Naive thymus-derived CD4-positive, alpha-beta T cell (primary cell): ENCODE measurements at regions of chr16 and their contacts with region 1.

Region 1: DNA sequence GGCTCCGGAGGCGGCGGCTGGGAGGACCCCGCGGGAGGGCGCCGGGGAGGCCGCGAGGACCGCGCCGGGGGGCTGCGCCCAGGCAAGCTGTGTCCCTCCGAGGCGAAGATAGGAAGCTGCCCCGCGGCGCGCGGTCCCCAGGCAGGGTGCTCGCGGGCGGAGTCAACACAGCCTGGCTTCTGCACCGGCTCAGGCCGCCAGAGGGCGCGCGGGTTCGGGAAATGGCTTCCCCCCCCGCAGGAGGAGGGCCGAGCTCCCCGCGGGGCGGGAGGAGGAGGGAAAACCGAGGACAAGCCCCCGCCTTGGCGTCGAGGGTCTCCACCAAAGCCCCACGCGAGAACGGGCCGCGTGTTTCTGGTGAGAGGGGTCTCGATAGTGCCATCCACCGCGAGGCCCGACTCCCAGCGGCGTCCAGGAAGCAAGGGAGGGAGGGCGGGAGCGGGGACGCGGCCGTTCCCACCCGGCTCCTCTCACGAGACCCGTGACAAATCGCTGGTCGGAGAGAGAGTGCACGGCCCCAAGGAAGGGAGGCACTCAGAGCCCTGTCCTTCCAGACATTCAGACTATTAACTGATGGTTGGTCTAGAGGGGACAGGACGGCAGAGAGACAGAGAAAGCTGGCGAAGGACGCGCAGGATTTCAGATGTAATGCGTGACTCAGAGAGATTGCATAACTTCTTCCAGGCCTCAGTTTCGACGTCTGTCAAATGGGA is 64.4 kb upstream of the DNAJA2 start:
- DNase-seq: peak; percentile 69 to 95 (median 83)
- ATAC-seq: peak; percentile 99
- H3K4me3 ChIP-seq: peak overlapping the region; percentile 62
- H3K4me3 Mint-ChIP-seq: peak overlapping the region; percentile 25 to 85 (median 74)
- H3K27ac ChIP-seq: peak overlapping the region; percentile 27
- H3K27ac Mint-ChIP-seq: peak overlapping the region in 1 of 9 donors; percentile 38
- H3K4me1 ChIP-seq: no peaks in the 10 kb centered on the region
- H3K4me1 Mint-ChIP-seq: peaks cover 0 to 8% (median 4%) of the 10 kb centered on the region in 7 donors
- H3K27me3 ChIP-seq: no peaks in the 10 kb centered on the region
- H3K27me3 Mint-ChIP-seq: peaks cover 0 to 13% (median 0%) of the 10 kb centered on the region in 5 donors

Region 2: DNA sequence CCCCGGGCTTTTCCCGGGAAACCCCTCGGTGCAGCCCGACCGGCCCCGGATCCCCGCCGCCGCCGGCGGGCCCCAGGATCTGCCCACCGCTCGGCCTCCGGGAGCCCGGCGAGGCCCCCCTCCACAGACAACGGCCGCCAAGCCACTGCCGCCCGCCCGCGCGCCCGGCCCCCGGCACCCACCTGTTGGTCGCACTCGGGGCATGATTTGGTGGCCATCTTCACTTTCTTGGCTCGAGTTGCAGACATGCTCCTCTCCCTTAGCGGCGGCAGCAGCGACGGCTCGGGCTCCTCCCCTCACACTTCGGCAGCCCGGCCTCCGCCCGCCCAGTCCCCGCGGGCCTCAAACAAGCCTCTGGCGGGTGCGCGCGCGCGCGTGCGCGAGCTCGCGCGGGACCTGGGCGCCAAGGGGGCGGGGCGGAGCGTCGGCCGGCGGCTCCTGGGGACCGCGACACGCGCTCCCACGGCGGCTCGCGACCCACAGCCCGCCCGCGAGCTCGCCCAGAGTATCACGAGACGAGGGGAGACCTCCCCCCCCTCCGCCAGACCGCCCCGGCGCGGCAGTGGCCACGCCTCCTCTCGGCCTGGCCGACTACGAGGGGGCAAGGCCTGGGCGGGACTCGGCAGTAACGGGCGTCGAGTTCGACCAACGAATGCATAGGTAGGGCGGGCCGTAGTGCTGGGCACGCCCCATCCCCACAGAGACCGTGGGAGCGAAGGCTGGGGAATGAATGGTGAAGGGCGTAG is 206.8 kb before region 1 on chr16 and contains the start of gene C16orf87:
- CTCF ChIA-PET with region 1: no interaction called
- POLR2A ChIA-PET with region 1: no interaction called
- intact Hi-C with region 1: loop called in 1 of 2 experiments (anchors 1 kb)
- DNase-seq: peak; percentile 88 to 95 (median 91)
- ATAC-seq: peak; percentile 96
- H3K4me3 ChIP-seq: peak within 1 kb of the TSS; percentile 46
- H3K4me3 Mint-ChIP-seq: peak within 1 kb of the TSS; percentile 94 to 99 (median 96)
- H3K27ac ChIP-seq: peak within 1 kb of the TSS; percentile 81
- H3K27ac Mint-ChIP-seq: peak within 1 kb of the TSS; percentile 90 to 98 (median 95)
- H3K4me1 ChIP-seq: peaks cover 9 to 12% of the 10 kb centered on the region in 2 donors
- H3K4me1 Mint-ChIP-seq: peaks cover 21 to 35% (median 29%) of the 10 kb centered on the region in 7 donors
- H3K27me3 ChIP-seq: no peaks in the 10 kb centered on the region
- H3K27me3 Mint-ChIP-seq: peaks cover 0 to 21% (median 0%) of the 10 kb centered on the region in 5 donors
- total RNA-seq, gene C16orf87: 5.6 to 14.0 (median 12.7) TPM

Region 3: DNA sequence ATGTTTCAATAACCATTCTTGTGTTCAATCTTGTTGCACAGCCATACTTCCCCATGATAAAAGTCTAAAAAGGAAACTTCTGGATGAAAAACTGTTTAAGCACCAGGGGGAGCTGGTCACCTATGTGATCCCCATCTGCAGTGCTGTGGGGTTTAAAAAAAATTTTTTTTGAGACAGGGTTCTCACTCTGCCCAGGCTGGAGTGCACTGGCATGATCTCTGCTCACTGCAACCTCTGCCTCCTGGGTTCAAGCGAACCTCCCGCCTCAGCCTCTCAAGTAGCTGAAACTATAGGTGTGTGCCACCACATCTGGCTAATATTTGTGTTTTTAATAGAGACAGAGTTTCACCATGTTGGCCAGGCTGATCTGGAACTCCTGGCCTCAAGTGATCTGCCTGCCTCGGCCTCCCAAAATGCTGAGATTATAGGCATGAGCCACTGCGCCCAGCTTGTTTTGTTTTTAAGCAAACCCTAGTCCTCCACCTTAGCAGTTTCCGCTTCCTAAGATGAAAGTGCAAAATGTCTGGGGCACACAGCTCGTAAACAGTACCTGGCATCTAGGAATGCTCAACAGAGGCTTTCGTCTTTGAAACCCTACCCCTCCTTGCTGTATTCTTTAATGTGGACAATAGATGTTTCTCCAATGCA is 89.9 kb before region 1 on chr16:
- CTCF ChIA-PET with region 1: no interaction called
- POLR2A ChIA-PET with region 1: no interaction called
- intact Hi-C with region 1: loop called (anchors 1 to 2 kb)
- DNase-seq: peak in 7 of 9 donors; percentile 11 to 49 (median 42)
- ATAC-seq: peak; percentile 89
- H3K4me3 ChIP-seq: no peak overlapping the region
- H3K4me3 Mint-ChIP-seq: no peak overlapping the region
- H3K27ac ChIP-seq: no peak overlapping the region
- H3K27ac Mint-ChIP-seq: no peak overlapping the region
- H3K4me1 ChIP-seq: no peaks in the 10 kb centered on the region
- H3K4me1 Mint-ChIP-seq: peaks cover 0 to 13% (median under 1%) of the 10 kb centered on the region in 7 donors
- H3K27me3 ChIP-seq: no peaks in the 10 kb centered on the region
- H3K27me3 Mint-ChIP-seq: no peaks in the 10 kb centered on the region

Region 4: GRCh38 chr16:47065766-47066688 is 28.1 kb after region 1 on chr16:
- CTCF ChIA-PET with region 1: no interaction called
- POLR2A ChIA-PET with region 1: no interaction called
- intact Hi-C with region 1: loop called in 1 of 2 experiments (anchors 1 kb)
- DNase-seq: no peak
- ATAC-seq: no peak
- H3K4me3 ChIP-seq: no peak overlapping the region
- H3K4me3 Mint-ChIP-seq: no peak overlapping the region
- H3K27ac ChIP-seq: no peak overlapping the region
- H3K27ac Mint-ChIP-seq: no peak overlapping the region
- H3K4me1 ChIP-seq: no peaks in the 10 kb centered on the region
- H3K4me1 Mint-ChIP-seq: peaks cover 0 to 16% (median 5%) of the 10 kb centered on the region in 7 donors
- H3K27me3 ChIP-seq: no peaks in the 10 kb centered on the region
- H3K27me3 Mint-ChIP-seq: peaks cover 0 to 10% (median 6%) of the 10 kb centered on the region in 5 donors

Region 5: DNA sequence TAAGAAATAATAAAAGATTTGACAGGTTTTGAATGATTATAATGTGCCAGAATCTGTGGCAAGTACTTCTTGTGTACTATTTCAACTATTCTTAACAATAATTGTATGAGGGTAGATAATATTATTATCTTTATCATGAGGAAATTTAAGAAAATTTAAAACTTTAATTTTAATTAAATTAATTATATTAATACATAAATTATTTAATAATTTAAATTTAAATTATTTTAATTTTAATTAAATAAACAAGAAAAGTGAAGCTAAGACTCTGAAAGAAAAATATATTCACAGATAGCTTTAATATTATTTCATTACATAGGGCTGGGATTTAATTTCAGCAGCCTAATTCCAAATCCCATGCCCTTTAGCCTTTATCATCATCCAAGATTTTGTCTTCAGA is 137.2 kb after region 1 on chr16:
- CTCF ChIA-PET with region 1: no interaction called
- POLR2A ChIA-PET with region 1: no interaction called
- intact Hi-C with region 1: no loop called
- DNase-seq: no peak
- ATAC-seq: no peak
- H3K4me3 ChIP-seq: no peak overlapping the region
- H3K4me3 Mint-ChIP-seq: no peak overlapping the region
- H3K27ac ChIP-seq: no peak overlapping the region
- H3K27ac Mint-ChIP-seq: no peak overlapping the region
- H3K4me1 ChIP-seq: no peaks in the 10 kb centered on the region
- H3K4me1 Mint-ChIP-seq: no peaks in the 10 kb centered on the region
- H3K27me3 ChIP-seq: no peaks in the 10 kb centered on the region
- H3K27me3 Mint-ChIP-seq: no peaks in the 10 kb centered on the region

Region 6: DNA sequence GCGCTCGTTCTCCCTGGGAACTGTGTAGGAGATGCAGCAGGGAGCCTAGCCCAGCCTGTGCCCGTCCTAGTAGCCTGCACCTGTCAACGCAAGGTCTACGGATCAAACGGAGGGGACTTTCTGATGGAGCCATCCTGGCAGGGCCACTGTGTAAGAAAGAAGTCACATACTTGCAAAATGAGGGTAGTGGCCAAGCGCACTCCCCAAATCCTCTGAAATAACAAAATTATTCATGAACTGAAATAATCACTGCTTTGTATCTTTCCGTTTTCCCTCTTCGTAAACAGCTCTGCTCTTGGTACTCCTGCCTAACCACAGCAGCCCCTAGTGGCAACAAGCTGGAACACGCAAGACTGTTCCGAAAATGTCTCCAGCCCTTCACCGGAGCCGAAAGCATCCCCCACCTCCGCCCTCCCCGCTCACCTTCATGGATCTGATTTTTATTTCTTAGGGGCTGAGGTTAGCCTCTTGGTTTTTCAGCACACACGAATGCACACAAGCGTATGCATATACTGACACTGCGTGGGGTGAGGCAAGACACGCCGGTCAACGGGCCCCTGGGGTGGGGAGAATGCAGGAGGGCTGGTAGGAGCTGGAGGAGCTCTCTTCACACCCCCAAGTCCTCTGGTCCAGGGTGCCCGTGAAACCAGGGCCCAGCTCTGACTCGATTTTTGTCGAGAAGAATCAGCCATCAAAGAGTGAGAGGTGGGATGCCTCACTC is 1017.1 kb after region 1 on chr16:
- CTCF ChIA-PET with region 1: no interaction called
- POLR2A ChIA-PET with region 1: no interaction called
- intact Hi-C with region 1: loop called in 1 of 2 experiments (anchors 5 kb)
- DNase-seq: peak in 2 of 9 donors; percentile 13 to 29
- ATAC-seq: peak; percentile 44
- H3K4me3 ChIP-seq: no peak overlapping the region
- H3K4me3 Mint-ChIP-seq: no peak overlapping the region
- H3K27ac ChIP-seq: no peak overlapping the region
- H3K27ac Mint-ChIP-seq: no peak overlapping the region
- H3K4me1 ChIP-seq: no peaks in the 10 kb centered on the region
- H3K4me1 Mint-ChIP-seq: peaks cover 0 to 5% (median 0%) of the 10 kb centered on the region in 7 donors
- H3K27me3 ChIP-seq: no peaks in the 10 kb centered on the region
- H3K27me3 Mint-ChIP-seq: peaks cover 14 to 28% (median 22%) of the 10 kb centered on the region in 5 donors

Region 7: DNA sequence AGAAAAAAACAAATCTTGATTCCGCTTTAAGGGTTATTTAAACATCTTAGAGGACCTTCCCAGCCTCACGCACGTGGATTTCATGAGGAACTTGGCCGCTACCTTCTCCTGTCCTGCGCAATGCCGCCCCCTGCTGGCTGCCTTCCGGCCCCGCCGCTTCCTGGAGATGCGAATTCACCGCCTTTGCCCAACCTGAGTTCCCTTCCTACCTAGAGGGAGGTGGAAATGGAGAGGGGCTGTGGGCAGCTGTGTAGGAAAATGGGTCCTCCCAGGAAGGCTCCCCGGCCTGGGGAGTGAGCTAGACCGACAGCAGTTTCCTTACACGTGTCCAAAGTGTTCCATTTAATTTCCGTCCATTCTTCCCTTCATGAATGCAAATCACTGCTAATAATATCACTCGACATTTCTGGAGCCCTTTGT is 1118.9 kb after region 1 on chr16:
- CTCF ChIA-PET with region 1: interaction called, 4 read pairs
- POLR2A ChIA-PET with region 1: no interaction called
- intact Hi-C with region 1: loop called (anchors 1 kb)
- DNase-seq: peak; percentile 33 to 89 (median 69)
- ATAC-seq: peak; percentile 88
- H3K4me3 ChIP-seq: no peak overlapping the region
- H3K4me3 Mint-ChIP-seq: no peak overlapping the region
- H3K27ac ChIP-seq: no peak overlapping the region
- H3K27ac Mint-ChIP-seq: no peak overlapping the region
- H3K4me1 ChIP-seq: no peaks in the 10 kb centered on the region
- H3K4me1 Mint-ChIP-seq: peaks cover 0 to 23% (median 0%) of the 10 kb centered on the region in 7 donors
- H3K27me3 ChIP-seq: no peaks in the 10 kb centered on the region
- H3K27me3 Mint-ChIP-seq: peaks cover 0 to 41% (median 9%) of the 10 kb centered on the region in 5 donors

Region 8: DNA sequence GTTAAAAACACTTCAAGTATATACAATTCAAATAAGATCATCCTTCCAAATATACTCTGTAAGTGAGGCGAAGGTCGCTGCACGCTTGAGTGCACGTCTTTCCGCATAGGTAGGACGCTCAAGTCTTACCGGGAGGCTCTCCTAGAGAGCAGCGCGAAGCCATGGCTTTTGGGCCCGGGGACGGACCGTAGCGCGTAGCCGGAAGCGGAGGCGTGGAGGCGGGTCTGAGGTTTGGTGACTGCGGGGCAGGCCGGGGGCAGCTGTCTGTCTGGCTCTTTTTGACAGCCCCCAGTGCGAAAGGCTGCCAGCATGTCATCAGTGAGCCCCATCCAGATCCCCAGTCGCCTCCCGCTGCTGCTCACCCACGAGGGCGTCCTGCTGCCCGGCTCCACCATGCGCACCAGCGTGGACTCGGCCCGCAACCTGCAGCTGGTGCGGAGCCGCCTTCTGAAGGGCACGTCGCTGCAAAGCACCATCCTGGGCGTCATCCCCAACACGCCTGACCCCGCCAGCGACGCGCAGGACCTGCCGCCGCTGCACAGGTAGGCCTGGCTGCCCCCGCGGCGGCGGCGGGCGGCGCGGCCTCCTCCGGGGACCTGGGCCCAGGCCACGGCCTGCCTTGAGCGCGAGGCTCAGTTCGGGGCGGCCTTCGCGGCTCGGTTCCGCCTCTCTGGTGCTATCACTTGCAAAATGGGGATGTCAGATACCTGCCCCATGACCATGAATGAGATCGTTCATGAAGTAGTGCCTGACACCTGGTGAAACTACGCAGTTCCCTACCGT is 1206.4 kb after region 1 on chr16 and contains the start of gene LONP2:
- CTCF ChIA-PET with region 1: no interaction called
- POLR2A ChIA-PET with region 1: no interaction called
- intact Hi-C with region 1: loop called in 1 of 2 experiments (anchors 1 kb)
- DNase-seq: peak; percentile 79 to 97 (median 93)
- ATAC-seq: peak; percentile 99
- H3K4me3 ChIP-seq: peak within 1 kb of the TSS; percentile 78
- H3K4me3 Mint-ChIP-seq: peak within 1 kb of the TSS; percentile 93 to 100 (median 96)
- H3K27ac ChIP-seq: peak within 1 kb of the TSS; percentile 78
- H3K27ac Mint-ChIP-seq: peak within 1 kb of the TSS; percentile 89 to 98 (median 96)
- H3K4me1 ChIP-seq: peaks cover 25 to 27% of the 10 kb centered on the region in 2 donors
- H3K4me1 Mint-ChIP-seq: peaks cover 29 to 56% (median 45%) of the 10 kb centered on the region in 7 donors
- H3K27me3 ChIP-seq: no peaks in the 10 kb centered on the region
- H3K27me3 Mint-ChIP-seq: no peaks in the 10 kb centered on the region
- total RNA-seq, gene LONP2: 62.3 to 124 (median 83.0) TPM